Activated CD4-positive, alpha-beta T cell treated with anti-CD3 and anti-CD28 coated beads for 36 hours (primary cell): ENCODE measurements at regions of chr16 and their contacts with region 1.

Region 1: DNA sequence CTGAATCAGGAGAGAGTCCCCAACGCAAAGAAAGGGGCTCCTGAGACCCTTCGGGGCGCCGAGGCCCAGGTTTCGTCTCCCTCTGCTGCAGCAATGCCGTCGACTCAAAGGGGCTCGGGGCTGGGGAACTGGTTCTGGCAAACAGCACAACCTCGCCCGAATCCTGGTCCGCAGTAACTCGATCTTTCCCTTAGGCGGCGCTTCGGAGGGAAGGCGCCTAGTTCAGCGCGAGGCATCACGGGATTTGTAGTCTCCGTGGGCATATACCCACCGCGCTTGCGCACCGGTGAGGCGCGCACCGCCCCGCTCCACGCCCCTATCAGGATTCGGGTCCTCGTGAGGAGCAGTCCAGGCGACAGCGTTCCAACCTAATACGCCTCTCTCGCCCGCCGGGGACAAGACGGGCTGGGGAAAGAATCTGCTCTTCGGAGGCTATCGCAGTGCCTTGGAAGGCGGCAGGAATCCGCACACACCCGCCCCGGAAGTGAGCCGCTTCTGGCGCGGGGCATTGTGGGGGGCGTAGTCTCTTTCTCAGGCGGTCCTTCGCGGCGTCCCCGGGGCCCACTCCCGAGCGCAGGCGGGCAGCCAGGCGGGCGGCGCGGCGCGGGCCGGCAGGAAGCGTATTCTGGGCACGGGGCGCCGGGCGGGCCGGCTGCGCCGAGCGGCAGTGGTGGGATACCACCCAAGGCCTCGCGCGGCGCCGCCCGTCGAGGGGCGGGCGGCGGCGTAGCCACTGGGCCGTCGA is at the start of gene THAP11:
- DNase-seq: peak; percentile 97
- ATAC-seq: peak; percentile 55
- H3K4me3 Mint-ChIP-seq: peak within 1 kb of the TSS; percentile 94
- H3K27ac Mint-ChIP-seq: peak within 1 kb of the TSS; percentile 97
- H3K4me1 Mint-ChIP-seq: peaks cover 33% of the 10 kb centered on the region
- H3K27me3 Mint-ChIP-seq: no peaks in the 10 kb centered on the region
- total RNA-seq, gene THAP11: 31.8 to 34.5 TPM

Region 2: DNA sequence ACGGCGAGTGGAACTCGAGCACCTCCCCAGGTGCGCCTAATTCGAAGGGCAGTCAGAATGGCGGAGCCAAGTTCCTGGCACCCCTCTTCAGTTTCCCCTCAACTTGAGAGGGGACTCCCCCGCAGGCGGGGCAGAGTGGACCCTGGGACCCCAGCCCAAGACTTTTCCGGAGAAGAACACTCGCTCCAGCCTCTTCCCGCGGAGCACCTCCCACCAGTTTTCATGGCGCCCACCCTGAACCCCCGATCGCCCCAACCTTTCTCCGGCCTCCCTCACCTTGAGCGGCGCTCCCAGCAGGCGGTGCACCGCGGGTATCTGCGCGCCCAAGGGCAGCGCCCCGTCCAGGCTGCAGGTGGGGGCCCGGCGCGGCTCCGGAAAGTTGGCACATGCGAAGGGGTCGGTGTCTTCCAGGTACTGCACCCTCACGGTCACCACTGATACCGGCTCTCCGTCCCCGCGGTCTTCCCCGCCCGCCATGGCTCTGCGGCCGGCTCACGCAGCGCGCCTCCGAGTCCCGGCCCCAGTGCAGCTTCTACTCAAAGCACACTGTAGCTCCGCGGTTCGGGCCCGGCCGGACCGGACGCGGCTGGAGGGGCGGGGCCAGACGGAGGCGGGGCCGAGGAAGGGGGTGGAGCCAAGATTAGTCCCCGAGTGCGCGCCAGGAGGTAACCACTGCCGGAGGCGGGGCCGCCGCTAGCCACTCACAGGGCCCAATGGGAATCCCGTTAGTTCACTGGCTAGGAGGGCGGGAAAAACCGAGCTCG is 594.8 kb before region 1 on chr16 and contains the start of gene FHOD1:
- CTCF ChIA-PET with region 1: no interaction called
- POLR2A ChIA-PET with region 1: no interaction called
- intact Hi-C with region 1: loop called in 1 of 2 experiments (anchors 1 kb)
- DNase-seq: peak; percentile 99
- ATAC-seq: peak; percentile 74
- H3K4me3 Mint-ChIP-seq: peak within 1 kb of the TSS; percentile 87
- H3K27ac Mint-ChIP-seq: peak within 1 kb of the TSS; percentile 85
- H3K4me1 Mint-ChIP-seq: peaks cover 52% of the 10 kb centered on the region
- H3K27me3 Mint-ChIP-seq: peaks cover 11% of the 10 kb centered on the region
- total RNA-seq, gene FHOD1: 75.5 to 77.2 TPM

Region 3: GRCh38 chr16:67719048-67719777 is 122.7 kb before region 1 on chr16 and contains the start of gene GFOD2:
- CTCF ChIA-PET with region 1: interaction called, 3 read pairs
- POLR2A ChIA-PET with region 1: no interaction called
- intact Hi-C with region 1: loop called in 1 of 2 experiments (anchors 1 kb)
- DNase-seq: peak; percentile 99
- ATAC-seq: peak; percentile 95
- H3K4me3 Mint-ChIP-seq: peak within 1 kb of the TSS; percentile 82
- H3K27ac Mint-ChIP-seq: peak within 1 kb of the TSS; percentile 98
- H3K4me1 Mint-ChIP-seq: peaks cover 29% of the 10 kb centered on the region
- H3K27me3 Mint-ChIP-seq: no peaks in the 10 kb centered on the region
- total RNA-seq, gene GFOD2: 8.7 to 11.5 TPM

Region 4: GRCh38 chr16:67816240-67817031 is 25.5 kb before region 1 on chr16:
- CTCF ChIA-PET with region 1: interaction called, 7 read pairs
- POLR2A ChIA-PET with region 1: no interaction called
- intact Hi-C with region 1: loop called in 1 of 2 experiments (anchors 1 kb)
- DNase-seq: peak; percentile 95
- ATAC-seq: peak; percentile 99
- H3K4me3 Mint-ChIP-seq: no peak overlapping the region
- H3K27ac Mint-ChIP-seq: peak overlapping the region; percentile 67
- H3K4me1 Mint-ChIP-seq: peaks cover 2% of the 10 kb centered on the region
- H3K27me3 Mint-ChIP-seq: no peaks in the 10 kb centered on the region

Region 5: GRCh38 chr16:67892899-67893742 is 51.2 kb after region 1 on chr16 and contains the start of gene PSKH1:
- CTCF ChIA-PET with region 1: interaction called, 3 read pairs
- POLR2A ChIA-PET with region 1: no interaction called
- intact Hi-C with region 1: loop called (anchors 1 to 5 kb)
- DNase-seq: peak; percentile 97
- ATAC-seq: peak; percentile 99
- H3K4me3 Mint-ChIP-seq: peak within 1 kb of the TSS; percentile 92
- H3K27ac Mint-ChIP-seq: peak within 1 kb of the TSS; percentile 92
- H3K4me1 Mint-ChIP-seq: peaks cover 30% of the 10 kb centered on the region
- H3K27me3 Mint-ChIP-seq: no peaks in the 10 kb centered on the region
- total RNA-seq, gene PSKH1: 11.7 to 11.9 TPM

Region 6: DNA sequence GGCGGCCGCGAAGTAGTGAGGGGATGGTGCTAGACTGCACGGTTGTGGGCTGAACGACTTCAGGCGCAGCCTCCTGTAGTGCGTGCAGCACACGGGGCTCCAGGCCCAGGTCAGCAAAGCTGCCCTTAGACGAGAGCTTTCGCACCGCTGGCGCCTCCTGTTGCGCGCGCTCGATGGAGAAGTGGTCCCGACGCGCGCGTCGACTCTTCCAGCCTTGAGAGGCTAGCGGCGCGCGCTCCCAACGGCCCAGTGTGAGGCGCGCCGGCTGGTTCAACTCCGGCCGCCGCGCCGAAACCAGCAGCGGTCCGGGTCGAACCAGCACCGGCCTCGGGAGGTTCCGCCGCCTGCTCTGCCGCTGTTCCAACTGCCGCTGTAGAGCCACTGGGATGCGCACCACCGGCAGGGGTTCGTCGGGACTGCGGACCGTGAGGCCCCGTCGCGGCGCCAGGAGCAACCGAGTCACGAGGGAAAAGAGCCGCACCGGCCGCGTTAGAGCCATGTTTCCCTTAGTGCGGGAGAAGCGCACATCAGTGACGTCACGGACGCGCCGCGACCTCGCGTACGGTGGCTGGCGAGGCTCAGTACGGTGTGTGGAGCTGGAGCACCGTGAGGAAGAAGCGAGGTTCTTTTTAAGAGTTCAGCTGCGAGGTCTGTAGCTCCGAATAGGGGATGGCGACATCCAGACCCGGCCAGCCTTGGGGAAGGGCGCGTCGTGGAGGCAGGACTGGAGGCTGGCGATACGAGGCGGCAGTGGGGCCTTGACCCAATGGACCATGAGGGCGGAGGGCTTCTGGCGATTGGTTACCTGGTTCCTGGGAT is 181.0 kb after region 1 on chr16 and contains the starts of genes DDX28 and DUS2:
- CTCF ChIA-PET with region 1: interaction called, 3 read pairs
- POLR2A ChIA-PET with region 1: interaction called, 4 read pairs
- intact Hi-C with region 1: loop called in 1 of 2 experiments (anchors 2 kb)
- DNase-seq: peak; percentile 95
- ATAC-seq: peak; percentile 89
- H3K4me3 Mint-ChIP-seq: peak within 1 kb of the TSS; percentile 95
- H3K27ac Mint-ChIP-seq: peak within 1 kb of the TSS; percentile 97
- H3K4me1 Mint-ChIP-seq: peaks cover 23% of the 10 kb centered on the region
- H3K27me3 Mint-ChIP-seq: no peaks in the 10 kb centered on the region
- total RNA-seq, gene DDX28: 13.7 to 17.1 TPM
- total RNA-seq, gene DUS2: 29.5 to 33.1 TPM